Activated CD4-positive, alpha-beta T cell treated with anti-CD3 and anti-CD28 coated beads, Interleukin-2, amount 10 ng/mL, durations not matched to agents 24 days and 14 days (primary cell): ENCODE measurements at regions of chr12 and their contacts with region 1.

Region 1: GRCh38 chr12:34126239-34126641 is 103.9 kb downstream of the ALG10 start:
- DNase-seq: peak; percentile 65
- H3K4me3 Mint-ChIP-seq: peak overlapping the region; percentile 52
- H3K27ac Mint-ChIP-seq: peak overlapping the region; percentile 46
- H3K4me1 Mint-ChIP-seq: peaks cover 16% of the 10 kb centered on the region
- H3K27me3 Mint-ChIP-seq: no peaks in the 10 kb centered on the region

Region 2: DNA sequence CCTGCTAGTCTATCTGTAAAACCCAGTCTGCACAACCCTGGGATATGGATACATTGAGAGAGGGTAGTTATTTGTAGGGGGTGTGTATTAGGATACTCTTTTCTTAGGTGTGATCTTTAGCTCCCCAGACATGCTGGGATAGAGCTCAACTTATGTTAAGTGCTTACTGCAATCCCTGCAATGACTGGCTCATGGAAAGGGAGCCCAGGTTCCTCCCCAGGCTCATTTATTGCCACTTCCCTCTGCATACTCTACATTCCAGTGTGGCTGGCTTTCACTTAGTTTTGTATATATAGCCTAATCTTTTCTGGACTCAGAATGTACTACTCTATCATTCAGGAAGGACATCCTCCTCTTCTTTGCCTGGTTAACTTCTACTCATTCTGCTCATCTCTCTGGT is 858.6 kb before region 1 on chr12:
- intact Hi-C with region 1: no loop called
- DNase-seq: no peak
- H3K4me3 Mint-ChIP-seq: no peak overlapping the region
- H3K27ac Mint-ChIP-seq: no peak overlapping the region
- H3K4me1 Mint-ChIP-seq: no peaks in the 10 kb centered on the region
- H3K27me3 Mint-ChIP-seq: no peaks in the 10 kb centered on the region

Region 3: GRCh38 chr12:34218165-34219045 is 92.2 kb after region 1 on chr12:
- intact Hi-C with region 1: loop called (anchors 1 kb)
- DNase-seq: peak; percentile 91
- H3K4me3 Mint-ChIP-seq: peak overlapping the region; percentile 89
- H3K27ac Mint-ChIP-seq: peak overlapping the region; percentile 80
- H3K4me1 Mint-ChIP-seq: peaks cover 8% of the 10 kb centered on the region
- H3K27me3 Mint-ChIP-seq: peaks cover 9% of the 10 kb centered on the region

Region 4: DNA sequence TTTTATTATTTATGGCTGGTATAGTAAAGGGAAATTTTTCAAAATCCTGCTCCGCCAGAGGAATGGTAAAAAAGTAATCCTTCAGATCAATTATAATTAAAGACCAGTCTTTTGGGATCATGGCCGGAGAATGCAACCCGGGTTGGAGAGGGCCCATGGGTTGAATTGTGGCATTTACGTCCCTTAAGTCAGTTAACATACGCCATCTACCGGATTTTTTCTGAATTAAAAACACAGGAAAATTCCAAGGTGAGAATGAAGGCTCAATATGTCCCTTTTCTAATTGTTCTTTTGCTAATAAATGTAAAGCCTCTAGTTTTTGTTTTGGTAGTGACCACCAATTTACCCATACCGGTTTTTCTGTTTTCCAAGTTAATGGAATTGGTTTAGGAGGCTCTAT is 498.9 kb after region 1 on chr12:
- intact Hi-C with region 1: loop called (anchors 10 kb)
- DNase-seq: no peak
- H3K4me3 Mint-ChIP-seq: no peak overlapping the region
- H3K27ac Mint-ChIP-seq: no peak overlapping the region
- H3K4me1 Mint-ChIP-seq: no peaks in the 10 kb centered on the region
- H3K27me3 Mint-ChIP-seq: no peaks in the 10 kb centered on the region